Activated CD8-positive, alpha-beta T cell treated with anti-CD3 and anti-CD28 coated beads, Interleukin-2, amount 10 ng/mL, durations not matched to agents 7 days and 5 days (primary cell): ENCODE measurements at regions of chr17 and their contacts with region 1.

Region 1: DNA sequence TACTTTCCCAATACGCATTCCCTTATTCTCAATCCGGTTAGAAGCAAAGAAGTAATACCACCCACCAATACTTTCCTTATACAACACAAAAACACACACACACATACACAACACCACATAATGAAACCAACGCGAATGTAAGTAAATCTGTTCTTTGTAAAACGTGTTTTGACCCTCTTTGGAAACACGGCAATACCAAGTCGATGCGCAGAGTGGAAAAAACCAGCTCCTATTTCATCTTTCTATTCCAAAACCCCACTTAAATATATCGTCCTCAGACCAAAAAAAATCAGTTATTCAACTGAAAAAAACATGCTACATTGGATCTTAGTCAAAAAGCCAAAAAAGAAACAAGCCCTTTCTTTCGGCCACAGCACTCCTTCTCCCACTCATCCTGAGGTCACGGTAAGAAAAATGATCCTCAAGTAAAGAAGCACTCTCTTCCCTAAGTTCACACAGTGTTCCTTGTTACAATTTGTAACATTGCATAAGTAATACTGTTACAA is 31.0 kb upstream of the ARL4D start:
- DNase-seq: peak; percentile 78
- ATAC-seq: peak; percentile 56
- H3K4me3 Mint-ChIP-seq: peak overlapping the region; percentile 92
- H3K27ac Mint-ChIP-seq: peak overlapping the region; percentile 100
- H3K4me1 Mint-ChIP-seq: peaks cover 52% of the 10 kb centered on the region
- H3K27me3 Mint-ChIP-seq: no peaks in the 10 kb centered on the region

Region 2: GRCh38 chr17:43079578-43080302 is 288.1 kb before region 1 on chr17:
- CTCF ChIA-PET with region 1: no interaction called
- POLR2A ChIA-PET with region 1: no interaction called
- DNase-seq: no peak
- ATAC-seq: no peak
- H3K4me3 Mint-ChIP-seq: no peak overlapping the region
- H3K27ac Mint-ChIP-seq: no peak overlapping the region
- H3K4me1 Mint-ChIP-seq: no peaks in the 10 kb centered on the region
- H3K27me3 Mint-ChIP-seq: no peaks in the 10 kb centered on the region

Region 3: GRCh38 chr17:43170766-43171585 is 196.8 kb before region 1 on chr17 and contains the start of gene NBR1:
- CTCF ChIA-PET with region 1: no interaction called
- POLR2A ChIA-PET with region 1: interaction called, 11 read pairs
- DNase-seq: peak; percentile 98
- ATAC-seq: peak; percentile 88
- H3K4me3 Mint-ChIP-seq: no peak within 1 kb of the TSS
- H3K27ac Mint-ChIP-seq: no peak within 1 kb of the TSS
- H3K4me1 Mint-ChIP-seq: peaks cover 35% of the 10 kb centered on the region
- H3K27me3 Mint-ChIP-seq: no peaks in the 10 kb centered on the region
- total RNA-seq, gene NBR1: 40.9 to 41.3 TPM

Region 4: DNA sequence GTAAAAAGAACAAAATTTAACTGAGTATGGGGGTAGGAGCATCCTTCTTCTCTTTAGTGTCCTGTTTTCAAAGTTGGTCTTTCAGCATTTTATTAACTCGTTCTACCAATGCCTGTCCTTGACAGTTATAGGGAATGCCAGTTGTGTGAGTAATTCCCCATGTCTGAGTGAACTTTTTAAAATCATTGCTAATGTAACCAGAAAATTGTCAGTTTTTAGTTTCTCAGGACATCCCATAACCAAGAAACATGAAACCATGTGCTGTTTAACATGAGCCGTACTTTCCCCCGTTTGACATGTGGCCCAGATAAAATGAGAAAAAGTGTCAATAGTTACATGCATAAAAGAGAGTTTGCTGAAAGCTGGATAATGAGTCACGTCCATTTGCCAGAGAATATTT is 40.4 kb before region 1 on chr17:
- CTCF ChIA-PET with region 1: no interaction called
- POLR2A ChIA-PET with region 1: interaction called, 12 read pairs
- DNase-seq: no peak
- ATAC-seq: no peak
- H3K4me3 Mint-ChIP-seq: no peak overlapping the region
- H3K27ac Mint-ChIP-seq: no peak overlapping the region
- H3K4me1 Mint-ChIP-seq: no peaks in the 10 kb centered on the region
- H3K27me3 Mint-ChIP-seq: peaks cover 24% of the 10 kb centered on the region

Region 5: DNA sequence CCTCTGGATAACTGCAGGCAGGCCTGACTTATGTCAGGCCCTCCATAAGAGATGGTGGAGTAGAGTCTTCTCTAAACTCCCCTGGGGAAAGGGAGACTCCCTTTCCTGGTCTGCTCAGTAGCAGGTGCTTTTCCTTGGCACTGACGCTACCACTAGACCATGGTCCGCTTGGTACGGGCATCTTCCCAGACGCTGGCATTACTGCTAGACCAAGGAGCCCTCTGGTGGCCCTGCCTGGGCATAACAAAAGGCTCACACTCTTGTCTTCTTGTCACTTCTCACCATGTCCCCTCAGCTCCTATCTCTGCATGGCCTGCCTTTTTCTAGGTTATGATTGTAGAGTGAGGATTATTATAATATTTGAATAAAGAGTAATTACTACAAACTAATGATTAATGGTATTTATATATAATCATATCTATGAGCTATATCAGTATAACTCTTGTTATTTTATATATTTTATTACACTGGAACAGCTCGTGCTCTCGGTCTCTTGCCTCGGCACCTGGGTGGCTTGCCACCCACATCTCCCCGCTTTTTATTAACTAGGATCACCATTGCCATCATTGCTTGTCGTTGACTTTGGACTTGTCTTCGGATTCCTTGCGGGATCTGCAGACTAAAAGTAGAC is 28.8 kb before region 1 on chr17:
- CTCF ChIA-PET with region 1: interaction called, 5 read pairs
- POLR2A ChIA-PET with region 1: interaction called, 29 read pairs
- DNase-seq: peak; percentile 73
- ATAC-seq: no peak
- H3K4me3 Mint-ChIP-seq: no peak overlapping the region
- H3K27ac Mint-ChIP-seq: no peak overlapping the region
- H3K4me1 Mint-ChIP-seq: peaks cover 15% of the 10 kb centered on the region
- H3K27me3 Mint-ChIP-seq: peaks cover 12% of the 10 kb centered on the region

Region 6: GRCh38 chr17:43349142-43349541 is 18.6 kb before region 1 on chr17:
- CTCF ChIA-PET with region 1: interaction called, 3 read pairs
- POLR2A ChIA-PET with region 1: interaction called, 29 read pairs
- DNase-seq: no peak
- ATAC-seq: no peak
- H3K4me3 Mint-ChIP-seq: no peak overlapping the region
- H3K27ac Mint-ChIP-seq: no peak overlapping the region
- H3K4me1 Mint-ChIP-seq: peaks cover 8% of the 10 kb centered on the region
- H3K27me3 Mint-ChIP-seq: no peaks in the 10 kb centered on the region

Region 7: DNA sequence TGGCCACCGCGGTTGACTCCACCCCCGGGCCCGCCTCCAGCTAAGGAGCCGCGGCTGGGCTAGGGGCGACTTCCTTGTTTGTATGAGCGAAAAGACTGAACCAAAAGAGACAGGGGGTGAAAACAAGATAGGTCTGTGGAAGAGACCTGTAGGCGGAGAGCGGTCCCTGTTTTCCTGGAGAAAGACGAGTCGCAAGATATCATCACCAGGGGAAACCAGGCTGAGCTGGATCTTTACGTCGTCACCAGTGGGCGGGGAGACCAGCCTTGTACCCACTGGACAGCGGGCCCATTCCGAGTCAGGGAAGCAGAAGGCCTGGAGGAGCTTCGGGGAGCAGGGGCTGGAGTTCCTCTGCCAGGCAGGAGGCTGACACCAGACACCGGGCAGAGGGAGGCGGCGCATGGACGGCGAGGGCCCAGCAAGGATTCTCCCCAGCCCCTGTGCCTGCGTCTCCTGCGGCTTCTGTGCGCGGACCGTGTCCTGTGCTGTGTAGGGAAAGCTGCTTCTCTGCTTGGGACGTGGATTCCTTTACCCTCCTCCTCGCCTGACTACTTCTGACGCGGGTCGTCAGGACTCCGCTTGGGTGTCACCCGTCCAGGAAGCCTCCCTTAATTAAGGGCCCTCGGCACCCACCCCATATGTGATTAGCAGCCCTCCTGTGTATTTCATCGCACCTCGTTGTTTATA is 20.7 kb after region 1 on chr17:
- CTCF ChIA-PET with region 1: interaction called, 39 read pairs
- POLR2A ChIA-PET with region 1: interaction called, 229 read pairs
- DNase-seq: peak; percentile 92
- ATAC-seq: peak; percentile 77
- H3K4me3 Mint-ChIP-seq: peak overlapping the region; percentile 82
- H3K27ac Mint-ChIP-seq: peak overlapping the region; percentile 95
- H3K4me1 Mint-ChIP-seq: peaks cover 27% of the 10 kb centered on the region
- H3K27me3 Mint-ChIP-seq: no peaks in the 10 kb centered on the region

Region 8: DNA sequence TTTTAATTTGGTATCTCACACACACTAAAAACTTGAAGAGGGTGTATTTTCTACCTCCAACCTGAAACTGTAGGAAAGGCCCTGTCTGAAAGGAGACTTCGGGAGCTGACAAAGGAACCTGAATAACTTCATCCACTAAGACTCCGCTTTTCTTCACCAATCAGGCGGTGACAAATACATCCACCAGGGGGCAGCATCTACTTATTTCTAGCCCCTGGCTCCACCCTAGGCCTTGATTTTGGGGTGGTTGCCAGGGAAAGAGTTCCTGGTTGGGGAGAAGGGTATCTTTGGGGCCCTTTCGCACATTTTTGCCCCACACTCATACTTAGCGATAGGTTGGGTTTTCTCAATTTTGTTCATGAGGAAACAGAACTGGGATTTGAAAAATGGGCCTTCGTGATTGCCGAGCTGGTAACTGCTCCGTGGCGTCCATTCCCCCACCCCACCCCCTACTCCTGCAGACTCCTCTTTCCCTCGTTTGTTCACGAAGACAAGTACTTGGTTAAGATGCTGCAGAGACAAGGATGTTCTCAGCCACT is 26.2 kb after region 1 on chr17:
- CTCF ChIA-PET with region 1: interaction called, 32 read pairs
- POLR2A ChIA-PET with region 1: interaction called, 229 read pairs
- DNase-seq: peak; percentile 95
- ATAC-seq: peak; percentile 61
- H3K4me3 Mint-ChIP-seq: no peak overlapping the region
- H3K27ac Mint-ChIP-seq: peak overlapping the region; percentile 10
- H3K4me1 Mint-ChIP-seq: peaks cover 47% of the 10 kb centered on the region
- H3K27me3 Mint-ChIP-seq: no peaks in the 10 kb centered on the region

Region 9: GRCh38 chr17:43431714-43432523 is 64.1 kb after region 1 on chr17:
- CTCF ChIA-PET with region 1: no interaction called
- POLR2A ChIA-PET with region 1: no interaction called
- DNase-seq: no peak
- ATAC-seq: no peak
- H3K4me3 Mint-ChIP-seq: no peak overlapping the region
- H3K27ac Mint-ChIP-seq: no peak overlapping the region
- H3K4me1 Mint-ChIP-seq: no peaks in the 10 kb centered on the region
- H3K27me3 Mint-ChIP-seq: peaks cover 19% of the 10 kb centered on the region